Heart right ventricle (tissue), 16 donors: ENCODE measurements at regions of chr10 and their contacts with region 1.

Region 1: GRCh38 chr10:33330543-33331378 is 3.7 kb downstream of the NRP1 start:
- DNase-seq: peak; percentile 84 to 92
- ATAC-seq: peak in 6 of 8 donors; percentile 18 to 40 (median 30)
- H3K4me3 ChIP-seq: peak overlapping the region; percentile 71 to 95 (median 92)
- H3K27ac ChIP-seq: peak overlapping the region in 9 of 10 donors; percentile 95 to 100 (median 99)
- H3K4me1 ChIP-seq: peaks cover 3 to 59% (median 47%) of the 10 kb centered on the region in 9 donors
- H3K27me3 ChIP-seq: peaks cover 0 to 11% (median 0%) of the 10 kb centered on the region in 7 donors
- CTCF ChIP-seq: peak; percentile 87 to 96 (median 93)

Region 2: GRCh38 chr10:32961895-32962369 is 368.8 kb before region 1 on chr10:
- intact Hi-C with region 1: no loop called
- DNase-seq: peak in 1 of 2 donors; percentile 33
- ATAC-seq: peak in 5 of 8 donors; percentile 25 to 61 (median 38)
- H3K4me3 ChIP-seq: peak overlapping the region in 6 of 10 donors; percentile 1 to 29 (median 18)
- H3K27ac ChIP-seq: peak overlapping the region; percentile 64 to 100 (median 84)
- H3K4me1 ChIP-seq: peaks cover 0 to 58% (median 48%) of the 10 kb centered on the region in 9 donors
- H3K27me3 ChIP-seq: no peaks in the 10 kb centered on the region
- CTCF ChIP-seq: no peak

Region 3: GRCh38 chr10:33193057-33193700 is 137.6 kb before region 1 on chr10:
- intact Hi-C with region 1: loop called in 8 of 10 experiments (anchors 2 to 10 kb)
- DNase-seq: peak; percentile 70 to 90
- ATAC-seq: peak; percentile 74 to 85 (median 82)
- H3K4me3 ChIP-seq: no peak overlapping the region
- H3K27ac ChIP-seq: peak overlapping the region in 8 of 10 donors; percentile 29 to 83 (median 62)
- H3K4me1 ChIP-seq: peaks cover 13 to 63% (median 54%) of the 10 kb centered on the region in 9 donors
- H3K27me3 ChIP-seq: no peaks in the 10 kb centered on the region
- CTCF ChIP-seq: peak; percentile 52 to 92 (median 82)

Region 4: GRCh38 chr10:33376976-33377657 is 46.4 kb after region 1 on chr10:
- intact Hi-C with region 1: no loop called
- DNase-seq: no peak
- ATAC-seq: no peak
- H3K4me3 ChIP-seq: no peak overlapping the region
- H3K27ac ChIP-seq: peak overlapping the region in 1 of 10 donors; percentile 38
- H3K4me1 ChIP-seq: peaks cover 0 to 14% (median 0%) of the 10 kb centered on the region in 9 donors
- H3K27me3 ChIP-seq: no peaks in the 10 kb centered on the region
- CTCF ChIP-seq: no peak

Region 5: DNA sequence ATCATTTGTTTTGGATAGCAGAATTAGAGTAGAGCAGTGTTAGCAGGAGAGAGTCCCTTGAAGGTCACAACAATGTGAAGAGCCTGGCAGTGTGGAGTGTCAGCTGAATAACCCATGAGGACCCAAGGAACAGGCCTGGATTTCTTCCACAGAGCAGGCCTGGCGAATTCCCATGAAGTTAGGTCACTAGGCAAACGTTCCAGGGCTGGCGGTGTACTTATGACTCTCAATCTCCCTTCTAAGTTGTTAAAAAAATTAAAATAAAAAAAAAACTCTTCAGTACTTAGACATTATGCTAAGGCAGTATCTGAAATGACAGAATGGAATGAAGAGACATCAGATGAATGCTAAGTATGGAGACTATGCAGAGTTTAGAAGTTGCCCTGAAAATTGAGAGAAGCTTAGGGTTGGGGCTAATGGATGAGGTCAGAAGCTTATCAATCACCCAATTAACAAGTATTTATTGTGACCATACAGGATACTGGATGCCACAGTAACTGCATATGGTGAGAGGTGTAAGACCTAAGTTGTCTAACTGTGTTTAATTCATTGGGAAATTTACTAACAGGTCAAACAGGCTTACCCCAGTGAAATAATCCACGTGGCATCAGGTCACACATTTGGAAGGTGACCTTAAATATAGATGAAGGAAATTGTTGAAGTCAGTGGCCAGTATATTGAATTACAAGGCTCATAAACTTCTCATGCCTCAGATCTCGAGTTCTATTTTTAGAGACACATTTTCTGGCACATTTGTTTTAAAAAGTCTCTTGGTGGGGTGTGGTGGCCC is 129.9 kb after region 1 on chr10:
- intact Hi-C with region 1: loop called in 1 of 10 experiments (anchors 10 kb)
- DNase-seq: peak; percentile 54 to 69
- ATAC-seq: peak; percentile 83 to 98 (median 96)
- H3K4me3 ChIP-seq: no peak overlapping the region
- H3K27ac ChIP-seq: peak overlapping the region in 8 of 10 donors; percentile 14 to 75 (median 66)
- H3K4me1 ChIP-seq: peaks cover 0 to 31% (median 22%) of the 10 kb centered on the region in 9 donors
- H3K27me3 ChIP-seq: no peaks in the 10 kb centered on the region
- CTCF ChIP-seq: no peak

Region 6: GRCh38 chr10:33715303-33715975 is 384.7 kb after region 1 on chr10:
- intact Hi-C with region 1: loop called in 4 of 10 experiments (anchors 5 to 10 kb)
- DNase-seq: peak; percentile 9 to 55
- ATAC-seq: peak in 6 of 8 donors; percentile 30 to 78 (median 64)
- H3K4me3 ChIP-seq: no peak overlapping the region
- H3K27ac ChIP-seq: peak overlapping the region in 1 of 10 donors; percentile 38
- H3K4me1 ChIP-seq: peaks cover 1 to 48% (median 30%) of the 10 kb centered on the region in 9 donors
- H3K27me3 ChIP-seq: no peaks in the 10 kb centered on the region
- CTCF ChIP-seq: no peak

Region 7: GRCh38 chr10:33887188-33887587 is 556.4 kb after region 1 on chr10:
- intact Hi-C with region 1: loop called in 2 of 10 experiments (anchors 5 kb)
- DNase-seq: no peak
- ATAC-seq: peak in 4 of 8 donors; percentile 50 to 73 (median 66)
- H3K4me3 ChIP-seq: no peak overlapping the region
- H3K27ac ChIP-seq: no peak overlapping the region
- H3K4me1 ChIP-seq: no peaks in the 10 kb centered on the region
- H3K27me3 ChIP-seq: no peaks in the 10 kb centered on the region
- CTCF ChIP-seq: peak in 2 of 9 donors; percentile 13 to 20

Region 8: GRCh38 chr10:34522546-34522945 is 1191.8 kb after region 1 on chr10:
- intact Hi-C with region 1: loop called in 1 of 10 experiments (anchors 10 kb)
- DNase-seq: no peak
- ATAC-seq: peak in 2 of 8 donors; percentile 34 to 63
- H3K4me3 ChIP-seq: peak overlapping the region in 2 of 10 donors; percentile 8 to 15
- H3K27ac ChIP-seq: no peak overlapping the region
- H3K4me1 ChIP-seq: peaks cover 0 to 21% (median 12%) of the 10 kb centered on the region in 9 donors
- H3K27me3 ChIP-seq: no peaks in the 10 kb centered on the region
- CTCF ChIP-seq: peak in 8 of 9 donors; percentile 24 to 62 (median 45)